Heart left ventricle (tissue), 16 donors: ENCODE measurements at regions of chr1 and their contacts with region 1.

Region 1: DNA sequence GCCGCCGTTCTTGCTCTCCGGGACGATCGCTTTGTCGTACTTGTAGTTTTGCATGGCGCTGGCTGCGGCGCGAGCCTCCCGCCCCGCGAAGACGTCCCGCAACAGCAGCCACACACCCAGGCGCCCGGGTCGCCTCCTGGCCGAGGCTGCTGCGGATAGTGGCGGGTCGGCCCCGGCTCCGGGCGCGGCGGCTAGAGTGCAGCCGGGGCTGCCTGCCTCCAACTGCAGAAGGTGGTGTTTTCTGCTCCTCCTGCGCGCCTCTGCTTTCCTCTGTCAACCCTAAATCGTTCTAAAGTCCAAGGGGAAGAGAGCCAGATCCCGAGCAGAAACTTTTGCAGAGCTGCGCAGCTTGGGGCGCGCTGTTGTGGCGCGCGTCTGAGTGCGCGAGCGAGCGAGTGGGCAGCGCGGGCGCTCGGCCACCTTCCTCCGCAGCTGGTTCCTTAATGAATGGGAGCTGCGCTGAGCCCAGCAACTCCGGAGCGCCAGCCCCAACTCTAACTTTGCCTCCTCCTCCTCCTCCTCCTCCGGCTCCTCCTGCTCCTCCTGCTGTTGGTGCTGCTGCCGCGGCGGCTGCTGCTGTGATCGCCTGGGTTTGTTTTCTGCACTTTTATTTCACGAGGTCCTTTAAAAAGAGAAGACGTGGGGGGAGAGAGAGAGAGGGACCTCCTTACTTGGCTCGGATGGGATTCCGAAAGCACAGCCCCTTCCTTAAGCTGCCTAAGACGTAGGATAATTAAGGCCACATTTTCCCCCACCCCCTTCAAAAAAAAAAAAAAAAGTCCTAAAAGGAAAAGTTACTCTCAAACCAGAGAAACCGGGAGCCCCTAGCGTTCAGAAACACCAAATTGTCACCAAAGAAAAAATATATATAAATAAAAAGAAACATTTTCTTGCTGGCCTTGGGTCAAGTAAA is at the start of gene PLPP3:
- DNase-seq: peak; percentile 87 to 93 (median 91)
- ATAC-seq: peak; percentile 82 to 93 (median 88)
- H3K4me3 ChIP-seq: peak within 1 kb of the TSS; percentile 82 to 99 (median 94)
- H3K27ac ChIP-seq: peak within 1 kb of the TSS; percentile 94 to 99 (median 98)
- H3K4me1 ChIP-seq: peaks cover 0 to 32% (median 11%) of the 10 kb centered on the region in 12 donors
- H3K27me3 ChIP-seq: no peaks in the 10 kb centered on the region
- CTCF ChIP-seq: peak; percentile 27 to 76 (median 52)
- POLR2A ChIP-seq: peak in 1 of 2 donors; percentile 94
- total RNA-seq, gene PLPP3: 75.8 to 221 (median 97.8) TPM

Region 2: DNA sequence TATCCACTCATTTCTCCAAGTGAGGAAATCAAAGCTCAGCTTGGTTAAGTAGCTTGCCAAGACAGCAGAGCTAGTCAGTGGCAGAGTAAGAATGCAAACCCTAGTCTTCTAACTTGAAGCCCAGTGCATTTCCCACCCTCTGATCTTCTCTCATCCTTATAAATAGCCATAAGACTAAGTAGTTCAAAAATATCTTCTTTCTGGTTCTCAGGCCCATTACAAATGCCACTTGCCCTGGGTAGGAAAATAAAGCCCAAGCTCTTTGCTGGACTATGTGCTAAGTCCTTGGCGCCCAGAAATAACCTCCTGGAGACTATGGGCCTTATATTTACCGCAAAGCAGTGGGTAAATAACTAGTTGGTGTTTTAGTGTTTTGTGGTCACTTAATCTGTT is 505.6 kb before region 1 on chr1:
- intact Hi-C with region 1: loop called in 2 of 10 experiments (anchors 2 to 10 kb)
- DNase-seq: no peak
- ATAC-seq: peak in 3 of 4 donors; percentile 9 to 30 (median 16)
- H3K4me3 ChIP-seq: no peak overlapping the region
- H3K27ac ChIP-seq: peak overlapping the region in 11 of 12 donors; percentile 2 to 73 (median 58)
- H3K4me1 ChIP-seq: peaks cover 0 to 26% (median 12%) of the 10 kb centered on the region in 12 donors
- H3K27me3 ChIP-seq: no peaks in the 10 kb centered on the region
- CTCF ChIP-seq: no peak
- POLR2A ChIP-seq: no peak

Region 3: GRCh38 chr1:56189946-56190792 is 389.1 kb before region 1 on chr1:
- intact Hi-C with region 1: loop called in 6 of 10 experiments (anchors 2 to 10 kb)
- DNase-seq: peak in 2 of 5 donors; percentile 20 to 38
- ATAC-seq: peak in 3 of 4 donors; percentile 57 to 86 (median 59)
- H3K4me3 ChIP-seq: no peak overlapping the region
- H3K27ac ChIP-seq: peak overlapping the region in 3 of 12 donors; percentile 19 to 40 (median 20)
- H3K4me1 ChIP-seq: peaks cover 0 to 20% (median 11%) of the 10 kb centered on the region in 12 donors
- H3K27me3 ChIP-seq: no peaks in the 10 kb centered on the region
- CTCF ChIP-seq: peak in 11 of 12 donors; percentile 25 to 67 (median 52)
- POLR2A ChIP-seq: no peak

Region 4: GRCh38 chr1:56409094-56409691 is 170.0 kb before region 1 on chr1:
- intact Hi-C with region 1: loop called in 8 of 10 experiments (anchors 2 to 10 kb)
- DNase-seq: peak in 1 of 5 donors; percentile 43
- ATAC-seq: no peak
- H3K4me3 ChIP-seq: no peak overlapping the region
- H3K27ac ChIP-seq: no peak overlapping the region
- H3K4me1 ChIP-seq: peaks cover 0 to 36% (median 14%) of the 10 kb centered on the region in 12 donors
- H3K27me3 ChIP-seq: no peaks in the 10 kb centered on the region
- CTCF ChIP-seq: peak in 11 of 12 donors; percentile 19 to 40 (median 30)
- POLR2A ChIP-seq: no peak

Region 5: DNA sequence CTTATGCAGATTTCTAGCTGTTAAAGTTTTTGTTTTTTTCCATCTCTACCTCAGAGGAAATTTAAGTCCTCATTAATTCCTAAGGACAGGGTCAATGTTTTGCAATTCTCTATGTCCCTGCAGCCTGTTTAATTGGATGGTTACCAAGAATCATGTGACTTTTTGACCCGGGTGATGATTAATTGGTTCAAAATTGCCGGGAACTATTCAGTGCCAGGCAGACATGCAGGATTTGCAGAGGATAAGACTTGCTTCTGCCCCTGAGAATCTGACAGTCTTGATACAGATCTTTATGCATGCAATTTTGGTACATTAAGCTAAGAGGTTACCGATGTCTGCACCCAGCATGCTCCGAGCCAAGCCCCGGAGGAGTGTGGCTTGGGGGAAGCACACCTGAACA is 87.8 kb before region 1 on chr1:
- intact Hi-C with region 1: loop called in 1 of 10 experiments (anchors 10 kb)
- DNase-seq: no peak
- ATAC-seq: peak in 2 of 4 donors; percentile 40 to 41
- H3K4me3 ChIP-seq: no peak overlapping the region
- H3K27ac ChIP-seq: no peak overlapping the region
- H3K4me1 ChIP-seq: peaks cover 0 to 25% (median 12%) of the 10 kb centered on the region in 12 donors
- H3K27me3 ChIP-seq: no peaks in the 10 kb centered on the region
- CTCF ChIP-seq: no peak
- POLR2A ChIP-seq: no peak

Region 6: DNA sequence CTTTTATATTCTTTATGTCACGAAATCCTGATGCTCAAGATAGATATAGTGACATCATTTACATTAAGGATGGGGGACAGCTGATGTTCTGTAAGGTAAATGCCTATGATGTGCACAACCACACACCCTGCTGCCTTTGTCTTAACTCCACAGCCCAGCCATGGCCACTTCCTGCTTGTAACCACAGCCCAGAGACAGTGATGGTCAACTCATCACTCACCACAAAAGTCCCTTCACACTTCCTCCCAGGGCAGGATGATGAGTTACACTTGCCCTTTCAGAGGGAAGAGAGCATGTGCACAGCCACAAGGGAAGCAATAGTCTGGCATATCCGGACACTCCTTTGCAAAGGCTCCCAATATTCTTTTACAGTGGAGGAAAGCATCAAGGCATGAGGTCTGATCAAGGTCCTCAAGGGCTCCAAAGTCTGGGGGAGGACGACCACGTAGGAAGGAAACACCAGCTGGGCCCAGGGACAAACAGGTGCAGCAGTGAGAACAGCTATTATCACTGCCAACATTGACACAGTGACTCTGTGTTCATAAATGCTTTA is 53.7 kb before region 1 on chr1:
- intact Hi-C with region 1: loop called in 1 of 10 experiments (anchors 5 kb)
- DNase-seq: peak in 3 of 5 donors; percentile 35 to 72 (median 43)
- ATAC-seq: peak in 3 of 4 donors; percentile 60 to 81 (median 76)
- H3K4me3 ChIP-seq: no peak overlapping the region
- H3K27ac ChIP-seq: peak overlapping the region in 7 of 12 donors; percentile 3 to 58 (median 17)
- H3K4me1 ChIP-seq: peaks cover 14 to 98% (median 75%) of the 10 kb centered on the region in 12 donors
- H3K27me3 ChIP-seq: peaks cover 0 to 10% (median 0%) of the 10 kb centered on the region in 9 donors
- CTCF ChIP-seq: no peak
- POLR2A ChIP-seq: no peak